Ascending aorta (tissue), 2 donors: ENCODE measurements at regions of chr20 and their contacts with region 1.

Region 1: DNA sequence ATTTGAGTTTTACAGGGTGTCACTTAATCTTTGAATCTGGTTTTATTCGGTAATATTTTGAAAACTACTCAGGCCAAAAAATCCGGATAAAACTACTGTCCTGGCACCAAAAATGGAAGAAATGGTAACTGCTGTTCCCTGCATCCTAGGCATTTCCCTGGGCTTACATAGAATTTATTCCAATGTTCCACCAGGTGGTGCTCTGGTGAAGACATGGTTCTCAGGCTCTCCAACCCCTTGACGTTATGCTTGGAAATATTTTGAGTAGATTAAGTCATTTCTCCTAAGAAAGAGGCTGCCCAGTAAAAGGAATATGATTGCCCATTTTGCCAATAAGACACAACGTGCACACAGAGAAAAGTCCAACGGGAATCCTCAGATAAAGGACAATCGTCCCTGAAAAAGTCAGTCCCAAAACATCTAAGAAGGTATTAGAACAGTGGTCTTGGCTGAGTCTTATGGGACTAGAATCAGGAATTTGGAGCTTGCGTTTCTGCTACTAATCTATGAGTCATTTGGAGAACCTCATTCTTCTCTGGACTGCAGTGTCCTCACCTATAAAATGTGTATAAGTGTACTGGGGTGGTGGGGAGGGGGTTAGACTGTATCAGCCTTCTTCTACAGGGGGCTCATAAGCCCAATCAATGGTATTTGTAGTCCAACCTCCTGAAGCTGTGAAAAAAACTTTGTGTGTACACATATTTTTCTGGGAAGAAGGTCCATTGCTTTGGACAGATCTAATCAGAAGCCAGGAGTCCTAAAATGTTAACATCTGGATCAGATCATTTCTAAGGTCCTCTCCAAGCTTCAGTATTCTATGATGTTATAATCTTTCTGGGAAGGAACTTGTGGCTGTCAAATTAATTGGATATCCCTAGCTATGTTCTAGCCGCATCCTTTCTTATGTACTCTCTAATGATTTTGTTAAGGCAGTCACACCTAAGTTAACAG is 131.0 kb upstream of the BMP2 start:
- DNase-seq: peak in 1 of 2 donors; percentile 63
- H3K4me3 ChIP-seq: no peak overlapping the region
- H3K27ac ChIP-seq: no peak overlapping the region
- H3K4me1 ChIP-seq: peaks cover 0 to 4% of the 10 kb centered on the region in 2 donors
- H3K27me3 ChIP-seq: no peaks in the 10 kb centered on the region
- CTCF ChIP-seq: peak; percentile 54 to 76 (median 59)

Region 2: GRCh38 chr20:6704132-6704861 is 67.8 kb after region 1 on chr20:
- intact Hi-C with region 1: loop called (anchors 5 kb)
- DNase-seq: no peak
- H3K4me3 ChIP-seq: no peak overlapping the region
- H3K27ac ChIP-seq: peak overlapping the region; percentile 86 to 90
- H3K4me1 ChIP-seq: peaks cover 0 to 29% of the 10 kb centered on the region in 2 donors
- H3K27me3 ChIP-seq: no peaks in the 10 kb centered on the region
- CTCF ChIP-seq: no peak

Region 3: DNA sequence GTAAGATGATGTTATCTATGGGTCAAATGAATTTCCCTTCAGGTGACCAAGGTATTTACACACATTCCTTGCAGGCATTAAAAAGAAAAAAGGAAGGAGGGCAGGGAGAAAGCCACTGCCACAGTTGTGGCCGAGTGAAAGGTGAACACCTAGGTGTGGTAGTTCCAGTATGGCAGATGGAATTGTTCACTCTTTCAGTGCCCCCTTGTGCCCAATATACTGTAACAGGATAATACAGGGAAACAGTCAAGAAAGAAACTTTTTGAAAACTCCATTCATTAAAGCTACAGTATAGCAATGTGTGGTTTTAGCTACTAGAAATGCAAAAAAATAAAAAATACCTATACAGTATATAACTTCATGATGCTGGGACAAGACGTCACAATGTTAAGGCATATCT is 183.1 kb after region 1 on chr20:
- intact Hi-C with region 1: loop called (anchors 10 kb)
- DNase-seq: no peak
- H3K4me3 ChIP-seq: no peak overlapping the region
- H3K27ac ChIP-seq: no peak overlapping the region
- H3K4me1 ChIP-seq: no peaks in the 10 kb centered on the region
- H3K27me3 ChIP-seq: no peaks in the 10 kb centered on the region
- CTCF ChIP-seq: peak in 1 of 3 experiments; percentile 27

Region 4: DNA sequence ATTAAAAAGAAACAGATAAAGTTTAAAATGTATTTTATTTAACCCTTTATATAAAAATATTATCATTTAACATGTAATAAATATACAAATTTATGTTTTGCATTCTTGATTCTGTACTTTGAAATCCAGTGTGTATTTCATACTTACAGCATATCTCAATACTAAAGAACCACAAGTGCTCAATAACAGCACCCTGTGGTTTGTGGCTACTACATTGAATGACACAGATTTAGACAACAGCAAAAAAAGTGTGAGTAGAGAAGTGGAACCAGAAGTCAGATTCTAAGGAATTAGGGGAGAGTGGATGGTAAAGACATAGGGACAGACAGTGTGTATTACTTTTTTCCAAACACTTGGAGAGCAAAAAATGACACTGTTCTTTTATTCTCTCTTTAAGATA is 655.5 kb after region 1 on chr20:
- intact Hi-C with region 1: loop called (anchors 10 kb)
- DNase-seq: no peak
- H3K4me3 ChIP-seq: no peak overlapping the region
- H3K27ac ChIP-seq: no peak overlapping the region
- H3K4me1 ChIP-seq: no peaks in the 10 kb centered on the region
- H3K27me3 ChIP-seq: no peaks in the 10 kb centered on the region
- CTCF ChIP-seq: no peak